ENCODE measurements at regions of chr11 and their contacts with region 1.

Region 1: GRCh38 chr11:67317205-67317887 is 14.0 kb downstream of the SSH3 start:
- DNase-seq: peak; percentile 99
- ATAC-seq: peak; percentile 83
- H3K4me3 Mint-ChIP-seq: peak overlapping the region; percentile 84
- H3K27ac Mint-ChIP-seq: peak overlapping the region; percentile 95
- H3K4me1 Mint-ChIP-seq: peaks cover 28% of the 10 kb centered on the region
- H3K27me3 Mint-ChIP-seq: peaks cover 3% of the 10 kb centered on the region

Region 2: GRCh38 chr11:67082035-67082791 is 235.1 kb before region 1 on chr11:
- CTCF ChIA-PET with region 1: interaction called, 3 read pairs
- POLR2A ChIA-PET with region 1: no interaction called
- intact Hi-C with region 1: loop called in 1 of 2 experiments (anchors 1 kb)
- DNase-seq: no peak
- ATAC-seq: no peak
- H3K4me3 Mint-ChIP-seq: no peak overlapping the region
- H3K27ac Mint-ChIP-seq: no peak overlapping the region
- H3K4me1 Mint-ChIP-seq: peaks cover 19% of the 10 kb centered on the region
- H3K27me3 Mint-ChIP-seq: peaks cover 5% of the 10 kb centered on the region

Region 3: GRCh38 chr11:67252831-67253239 is 64.5 kb before region 1 on chr11:
- CTCF ChIA-PET with region 1: interaction called, 13 read pairs
- POLR2A ChIA-PET with region 1: no interaction called
- intact Hi-C with region 1: no loop called
- DNase-seq: peak; percentile 55
- ATAC-seq: peak; percentile 75
- H3K4me3 Mint-ChIP-seq: no peak overlapping the region
- H3K27ac Mint-ChIP-seq: peak overlapping the region; percentile 47
- H3K4me1 Mint-ChIP-seq: peaks cover 16% of the 10 kb centered on the region
- H3K27me3 Mint-ChIP-seq: no peaks in the 10 kb centered on the region

Region 4: DNA sequence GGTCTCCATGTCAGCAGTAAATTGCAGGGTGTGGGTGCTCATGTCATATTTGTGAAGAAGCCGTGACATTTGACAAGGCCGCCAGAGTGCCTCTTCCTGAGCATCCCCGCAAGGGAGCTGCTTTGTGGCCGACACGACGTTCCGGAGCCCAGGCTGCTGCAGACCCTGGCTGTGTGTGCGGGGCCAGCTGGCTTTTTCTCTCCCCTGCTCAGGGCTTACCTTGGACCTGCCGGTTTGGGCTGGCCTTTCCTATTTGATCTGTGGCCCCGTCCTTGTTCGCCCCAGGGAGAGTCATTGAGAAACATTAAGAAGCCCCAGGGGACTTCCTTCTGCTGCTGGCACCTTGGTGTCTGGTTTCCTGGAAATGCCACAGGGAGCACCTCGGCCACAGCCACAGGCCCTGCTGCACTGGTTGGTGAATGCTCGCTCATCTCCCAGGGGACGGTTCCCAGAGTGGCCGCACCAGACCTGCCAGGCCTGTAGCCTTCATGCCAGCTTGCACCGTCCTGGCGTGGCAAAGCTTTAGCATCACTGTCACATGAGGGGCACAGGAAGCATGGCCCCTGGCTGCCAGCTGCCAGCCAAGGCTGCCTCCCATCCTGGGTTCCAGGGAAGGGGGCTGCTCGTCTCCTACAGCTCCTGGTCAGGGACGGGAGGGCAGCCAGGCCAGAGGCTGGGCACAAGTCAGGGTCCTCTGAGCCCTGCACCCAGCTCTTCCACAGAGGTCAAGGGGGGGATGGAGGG is 45.6 kb before region 1 on chr11:
- CTCF ChIA-PET with region 1: interaction called, 11 read pairs
- POLR2A ChIA-PET with region 1: interaction called, 8 read pairs
- intact Hi-C with region 1: loop called (anchors 1 kb)
- DNase-seq: peak; percentile 85
- ATAC-seq: peak; percentile 31
- H3K4me3 Mint-ChIP-seq: peak overlapping the region; percentile 98
- H3K27ac Mint-ChIP-seq: peak overlapping the region; percentile 99
- H3K4me1 Mint-ChIP-seq: peaks cover 82% of the 10 kb centered on the region
- H3K27me3 Mint-ChIP-seq: no peaks in the 10 kb centered on the region

Region 5: DNA sequence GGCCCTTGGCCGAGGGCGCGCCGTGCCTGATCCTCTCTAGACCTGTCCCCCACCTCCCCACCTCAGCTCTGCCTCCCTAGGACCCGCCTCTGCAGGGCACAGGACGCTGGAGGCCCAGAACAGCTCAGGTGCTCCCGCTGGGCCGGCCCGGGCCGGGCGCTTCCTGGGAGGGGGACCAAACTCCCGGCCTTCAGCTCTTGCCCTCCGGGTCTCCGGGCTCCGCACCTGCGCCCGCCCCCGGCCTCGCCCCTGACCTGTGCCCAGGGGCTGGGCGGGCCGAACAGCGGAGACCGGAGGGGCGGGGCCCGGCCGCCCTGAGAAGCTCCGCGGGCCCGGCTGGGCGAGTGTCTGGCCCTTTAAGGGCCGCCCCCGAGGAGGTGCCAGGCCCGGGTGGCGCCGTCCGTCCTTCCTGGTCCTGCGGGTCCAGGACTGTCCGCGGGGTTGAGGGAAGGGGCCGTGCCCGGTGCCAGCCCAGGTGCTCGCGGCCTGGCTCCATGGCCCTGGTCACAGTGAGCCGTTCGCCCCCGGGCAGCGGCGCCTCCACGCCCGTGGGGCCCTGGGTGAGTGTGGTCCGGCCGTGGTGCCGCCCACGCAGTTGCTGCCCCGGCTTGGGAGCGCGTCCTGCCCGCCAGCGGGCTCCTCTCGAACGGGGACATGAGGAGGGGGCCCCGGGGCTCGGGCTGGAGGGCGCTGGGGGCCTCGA is 14.1 kb before region 1 on chr11 and contains the start of gene SSH3:
- CTCF ChIA-PET with region 1: interaction called, 8 read pairs
- POLR2A ChIA-PET with region 1: interaction called, 5 read pairs
- intact Hi-C with region 1: loop called in 1 of 2 experiments (anchors 2 kb)
- DNase-seq: peak; percentile 57
- ATAC-seq: peak; percentile 76
- H3K4me3 Mint-ChIP-seq: peak within 1 kb of the TSS; percentile 52
- H3K27ac Mint-ChIP-seq: no peak within 1 kb of the TSS
- H3K4me1 Mint-ChIP-seq: peaks cover 5% of the 10 kb centered on the region
- H3K27me3 Mint-ChIP-seq: no peaks in the 10 kb centered on the region
- total RNA-seq, gene SSH3: 6.0 to 11.1 TPM

Measured in activated CD4-positive, alpha-beta T cell treated with anti-CD3 and anti-CD28 coated beads for 36 hours (primary cell).